HCT116 (cell line): ENCODE measurements at regions of chr4 and their contacts with region 1.

Region 1: GRCh38 chr4:16443504-16444088 is 217.3 kb upstream of the TAPT1 start:
- DNase-seq: peak; percentile 12
- ATAC-seq: peak; percentile 73
- H3K4me3 ChIP-seq: no peak overlapping the region
- H3K27ac ChIP-seq: no peak overlapping the region
- H3K4me1 ChIP-seq: no peaks in the 10 kb centered on the region
- H3K27me3 ChIP-seq: 0 out of 2 replicates have a peak, but pooled peaks cover 8% of the 10 kb centered on the region
- CTCF ChIP-seq: peak; percentile 17 to 66 (median 64); a peak in 5 of 6 replicates
- POLR2A ChIP-seq: no peak
- RAD21 ChIP-seq: peak; percentile 47

Region 2: GRCh38 chr4:16026160-16026761 is 417.3 kb before region 1 on chr4:
- CTCF ChIA-PET with region 1: no interaction called
- POLR2A ChIA-PET with region 1: no interaction called
- RAD21 ChIA-PET with region 1: no interaction called
- intact Hi-C with region 1: loop called (anchors 10 kb)
- DNase-seq: peak; percentile 48
- ATAC-seq: peak; percentile 42; the same call in 1 of the 2 replicates
- H3K4me3 ChIP-seq: no peak overlapping the region
- H3K27ac ChIP-seq: no peak overlapping the region
- H3K4me1 ChIP-seq: no peaks in the 10 kb centered on the region
- H3K27me3 ChIP-seq: no peaks in the 10 kb centered on the region
- CTCF ChIP-seq: peak; percentile 65 to 95 (median 76)
- POLR2A ChIP-seq: no peak
- RAD21 ChIP-seq: peak; percentile 85

Region 3: DNA sequence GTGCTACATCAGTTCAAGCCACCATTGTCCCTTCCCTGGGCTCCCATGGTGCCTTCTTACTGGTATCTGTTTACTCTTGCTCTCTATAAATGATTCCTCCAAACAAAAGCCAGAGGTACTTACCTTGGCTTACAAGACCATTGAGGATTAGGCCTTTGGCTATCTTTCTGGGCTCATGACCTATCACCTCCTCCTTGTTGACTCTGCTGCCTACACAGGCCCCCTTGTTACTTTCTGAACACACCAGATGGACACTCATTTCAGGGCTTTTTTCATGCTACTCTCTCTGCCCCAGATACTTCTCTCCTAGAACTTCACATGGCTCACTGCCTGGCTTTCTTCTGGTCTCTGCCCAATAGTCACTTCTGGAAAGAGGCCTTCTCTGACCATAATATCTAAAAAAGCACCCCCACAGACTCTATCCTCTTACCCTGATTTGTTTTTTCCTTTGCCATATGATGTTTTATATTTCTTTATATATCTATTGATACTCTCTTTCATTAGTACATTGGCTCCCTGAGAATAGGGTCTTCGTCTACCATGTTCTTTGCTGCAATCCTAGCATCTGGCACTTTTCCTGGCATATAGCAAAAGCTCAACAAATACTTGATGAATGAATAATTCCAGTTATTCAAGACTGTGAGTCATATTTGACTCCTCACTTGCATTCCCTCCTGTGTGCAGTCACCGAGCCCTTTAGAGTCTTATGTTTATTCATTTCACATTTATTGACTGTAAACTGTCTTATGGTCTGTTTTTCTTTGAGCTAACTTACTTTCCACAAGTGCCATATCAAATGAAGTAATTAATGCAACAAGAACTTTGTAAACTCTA is 190.3 kb before region 1 on chr4:
- CTCF ChIA-PET with region 1: no interaction called
- POLR2A ChIA-PET with region 1: no interaction called
- RAD21 ChIA-PET with region 1: no interaction called
- intact Hi-C with region 1: no loop called
- DNase-seq: no peak
- ATAC-seq: peak; percentile 47; the same call in 1 of the 2 replicates
- H3K4me3 ChIP-seq: no peak overlapping the region
- H3K27ac ChIP-seq: no peak overlapping the region
- H3K4me1 ChIP-seq: peaks cover 0 to 23% of the 10 kb centered on the region in 2 experiments; a peak in 2 of 4 replicates
- H3K27me3 ChIP-seq: no peaks in the 10 kb centered on the region
- CTCF ChIP-seq: no peak
- POLR2A ChIP-seq: no peak
- RAD21 ChIP-seq: no peak

Region 4: GRCh38 chr4:16289897-16290554 is 153.6 kb before region 1 on chr4:
- CTCF ChIA-PET with region 1: no interaction called
- POLR2A ChIA-PET with region 1: no interaction called
- RAD21 ChIA-PET with region 1: no interaction called
- intact Hi-C with region 1: loop called (anchors 1 kb)
- DNase-seq: peak; percentile 7
- ATAC-seq: peak; percentile 62; the same call in 1 of the 2 replicates
- H3K4me3 ChIP-seq: no peak overlapping the region
- H3K27ac ChIP-seq: no peak overlapping the region
- H3K4me1 ChIP-seq: no peaks in the 10 kb centered on the region
- H3K27me3 ChIP-seq: peaks cover 17% of the 10 kb centered on the region
- CTCF ChIP-seq: peak; percentile 32 to 70 (median 59); a peak in 4 of 6 replicates
- POLR2A ChIP-seq: no peak
- RAD21 ChIP-seq: peak; percentile 74